T-cell (primary cell): ENCODE measurements at regions of chr11 and their contacts with region 1.

Region 1: DNA sequence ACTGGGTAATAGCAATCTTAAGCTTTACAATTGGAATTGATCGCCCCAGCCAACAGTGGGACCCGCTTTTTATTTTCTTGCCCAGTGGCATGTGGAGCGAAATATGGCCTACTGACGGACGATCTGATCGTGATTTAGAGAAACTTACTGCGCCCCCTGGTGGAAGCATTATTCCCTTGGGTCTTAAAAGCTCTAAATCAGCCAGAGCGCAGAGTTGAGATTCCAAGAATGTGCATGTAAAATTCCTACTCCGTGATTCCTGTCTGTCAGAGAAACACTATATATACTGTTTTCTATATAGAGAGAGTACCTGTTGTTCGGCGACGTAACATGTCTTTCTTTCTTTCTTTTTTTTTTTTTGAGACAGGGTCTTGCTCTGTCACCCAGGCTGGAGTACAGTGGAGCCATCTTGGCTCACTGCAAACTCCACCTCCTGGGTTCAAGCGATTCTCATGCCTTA is 3.7 kb upstream of the DPF2 start:
- DNase-seq: peak; percentile 42 to 93 (median 76)
- ATAC-seq: no peak
- H3K4me3 ChIP-seq: no peak overlapping the region
- H3K4me3 Mint-ChIP-seq: peak overlapping the region in 1 of 3 donors; percentile 21
- H3K27ac ChIP-seq: no peak overlapping the region
- H3K27ac Mint-ChIP-seq: peak overlapping the region; percentile 58 to 64
- H3K4me1 ChIP-seq: peaks cover 6 to 15% of the 10 kb centered on the region in 2 experiments
- H3K4me1 Mint-ChIP-seq: peaks cover 19 to 21% (median 19%) of the 10 kb centered on the region in 3 donors
- H3K27me3 ChIP-seq: peaks cover 0 to 6% of the 10 kb centered on the region in 2 experiments
- H3K27me3 Mint-ChIP-seq: peaks cover 0 to 4% of the 10 kb centered on the region in 2 donors

Region 2: GRCh38 chr11:65314501-65315203 is 15.3 kb before region 1 on chr11 and contains the start of gene CDC42EP2:
- CTCF ChIA-PET with region 1: interaction called, 6 to 64 read pairs
- POLR2A ChIA-PET with region 1: interaction called in 1 of 2 experiments, 5 read pairs
- DNase-seq: peak in 33 of 35 experiments; percentile 25 to 82 (median 55)
- ATAC-seq: peak; percentile 93
- H3K4me3 ChIP-seq: peak within 1 kb of the TSS; percentile 82 to 87
- H3K4me3 Mint-ChIP-seq: peak within 1 kb of the TSS; percentile 70 to 76 (median 74)
- H3K27ac ChIP-seq: no peak within 1 kb of the TSS
- H3K27ac Mint-ChIP-seq: peak within 1 kb of the TSS in 1 of 2 donors; percentile 36
- H3K4me1 ChIP-seq: peaks cover 0 to 19% of the 10 kb centered on the region in 2 experiments
- H3K4me1 Mint-ChIP-seq: peaks cover 8 to 13% (median 9%) of the 10 kb centered on the region in 3 donors
- H3K27me3 ChIP-seq: peaks cover 0 to 22% of the 10 kb centered on the region in 2 experiments
- H3K27me3 Mint-ChIP-seq: peaks cover 0 to 5% of the 10 kb centered on the region in 2 donors
- total RNA-seq, gene CDC42EP2: 0.69 to 2.4 (median 0.79) TPM